Mammary epithelial cell (primary cell): ENCODE measurements at regions of chr14 and their contacts with region 1.

Region 1: DNA sequence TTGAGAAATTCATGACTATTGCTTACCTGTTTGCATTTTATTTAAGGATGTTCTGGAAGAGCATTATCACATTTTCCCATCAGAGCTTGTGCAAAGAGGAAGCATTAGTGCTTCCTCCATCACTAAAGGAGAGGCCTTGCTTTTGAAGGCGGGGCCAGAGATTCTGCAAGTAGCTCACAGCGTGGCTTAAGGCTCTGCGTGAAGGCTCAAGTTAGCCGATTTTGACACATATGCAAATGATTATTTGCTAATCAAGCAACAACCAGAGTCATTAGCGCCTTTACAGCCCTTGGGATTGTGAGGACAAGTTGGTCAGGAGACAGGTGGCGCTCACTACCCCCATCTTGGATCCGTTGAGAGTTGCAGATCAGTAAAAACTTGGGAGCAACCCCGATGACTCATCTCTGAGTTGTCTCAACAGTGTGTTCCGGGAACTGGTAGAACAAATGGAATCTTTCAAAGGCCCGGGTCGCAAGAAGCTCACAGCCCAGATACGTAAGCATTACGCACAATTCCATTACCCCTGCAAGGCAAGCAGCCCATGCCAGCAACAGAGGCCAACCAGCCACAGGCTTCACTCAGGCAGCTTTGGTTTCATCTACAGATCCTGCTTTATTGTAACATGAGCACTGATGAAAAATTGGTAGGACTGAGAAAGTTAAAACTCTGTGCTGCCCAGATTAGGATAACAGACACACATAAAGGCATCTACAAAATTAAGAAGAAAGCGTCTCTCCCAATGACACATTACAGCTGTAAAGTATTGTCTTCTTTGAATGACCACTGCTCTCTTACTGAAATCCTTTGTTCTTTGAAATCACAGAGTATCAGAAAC is 34.9 kb upstream of the SPTSSA start:
- DNase-seq: peak; percentile 98
- H3K4me3 ChIP-seq: no peak overlapping the region
- H3K27ac ChIP-seq: peak overlapping the region; percentile 89
- H3K4me1 ChIP-seq: peaks cover 18% of the 10 kb centered on the region
- H3K27me3 ChIP-seq: no peaks in the 10 kb centered on the region
- CTCF ChIP-seq: peak; percentile 3 to 46

Region 2: GRCh38 chr14:34461334-34462131 is 35.4 kb before region 1 on chr14:
- CTCF ChIA-PET with region 1: interaction called, 4 read pairs
- dilution Hi-C with region 1: no loop called
- in situ Hi-C with region 1: no loop called
- intact Hi-C with region 1: loop called (anchors 1 kb)
- DNase-seq: peak; percentile 42
- H3K4me3 ChIP-seq: peak overlapping the region; percentile 72 to 77 (median 76)
- H3K27ac ChIP-seq: peak overlapping the region; percentile 77
- H3K4me1 ChIP-seq: peaks cover 8% of the 10 kb centered on the region
- H3K27me3 ChIP-seq: no peaks in the 10 kb centered on the region
- CTCF ChIP-seq: no peak